Right ventricle myocardium inferior (tissue), 1 donor: ENCODE measurements at regions of chr3 and their contacts with region 1.

Region 1: GRCh38 chr3:43621656-43622432 is at the start of gene ANO10:
- DNase-seq: peak; percentile 99
- ATAC-seq: peak; percentile 99
- total RNA-seq, gene ANO10: 12.3 TPM

Region 2: GRCh38 chr3:42804106-42804830 is 817.6 kb before region 1 on chr3 and contains the start of gene HIGD1A:
- intact Hi-C with region 1: no loop called
- DNase-seq: peak; percentile 98
- ATAC-seq: peak; percentile 100
- total RNA-seq, gene HIGD1A: 335 TPM

Region 3: DNA sequence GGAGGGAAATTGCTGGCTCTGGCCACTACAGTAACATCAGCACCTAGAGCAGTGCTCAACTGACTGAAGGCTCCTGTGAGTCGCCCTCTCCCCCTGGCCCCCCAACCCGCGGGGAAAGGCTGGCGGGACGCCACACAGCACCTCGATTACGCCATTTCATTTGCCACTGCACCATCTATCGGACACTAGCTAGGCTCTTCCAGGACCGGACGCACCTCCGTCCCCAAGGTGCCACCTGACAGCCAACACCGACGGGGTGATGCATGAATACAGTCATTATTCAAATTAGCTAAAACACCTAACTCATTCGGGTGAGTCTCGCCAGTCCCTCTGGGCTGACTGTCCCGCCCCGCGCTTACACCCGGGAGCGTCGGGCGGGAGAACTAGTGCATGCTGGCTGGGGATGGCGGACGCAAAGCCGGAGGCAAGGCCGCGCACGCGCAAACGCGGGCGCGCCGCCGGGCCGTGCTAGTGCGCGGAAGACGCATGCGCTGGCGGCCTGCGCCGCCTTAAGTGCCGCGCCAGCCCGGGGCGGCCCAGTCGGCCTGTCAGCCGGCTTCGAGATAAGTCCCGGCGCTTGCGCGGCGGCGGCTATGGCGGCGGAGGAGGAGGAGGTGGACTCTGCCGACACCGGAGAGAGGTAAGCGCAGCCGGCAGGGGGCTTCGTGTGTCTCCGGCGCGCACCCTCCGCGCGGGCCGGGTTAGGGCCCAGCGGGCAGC is 68.7 kb after region 1 on chr3 and contains the start of gene ABHD5:
- intact Hi-C with region 1: loop called (anchors 2 kb)
- DNase-seq: peak; percentile 96
- ATAC-seq: peak; percentile 96
- total RNA-seq, gene ABHD5: 25.4 TPM

Region 4: GRCh38 chr3:43769471-43770425 is 147.9 kb after region 1 on chr3:
- intact Hi-C with region 1: loop called (anchors 5 kb)
- DNase-seq: peak; percentile 98
- ATAC-seq: peak; percentile 89